Transverse colon (tissue), 4 donors: ENCODE measurements at regions of chr11 and their contacts with region 1.

Region 1: DNA sequence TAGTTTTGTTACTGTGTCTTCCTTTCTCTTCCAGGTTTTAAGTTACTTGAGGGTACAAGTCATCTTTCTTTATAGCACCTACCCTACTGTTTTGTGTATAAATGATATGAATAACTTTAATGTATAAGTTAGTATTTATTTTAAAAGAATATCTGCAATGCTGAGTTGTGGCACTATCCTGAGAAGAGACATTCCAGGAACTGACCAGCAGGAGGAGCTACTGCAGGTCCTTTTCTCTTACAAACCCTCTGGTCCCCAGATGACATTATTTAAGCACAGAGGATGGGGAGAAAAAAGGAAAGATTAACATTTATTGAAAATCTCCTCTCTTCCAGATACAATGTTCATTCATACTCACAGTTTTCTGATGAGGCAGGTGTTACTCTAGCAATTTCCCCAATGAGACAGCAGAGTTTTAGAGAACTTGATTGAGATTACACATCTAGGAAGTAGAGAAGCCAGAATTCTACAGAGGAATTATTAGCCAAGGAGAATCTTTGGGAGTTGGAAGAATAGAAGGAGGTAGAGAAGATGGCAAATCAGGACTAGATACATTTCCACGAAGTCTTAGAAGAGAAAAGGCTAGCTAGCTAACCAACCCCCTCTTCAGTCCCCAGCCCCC is 541.2 kb upstream of the API5 start:
- DNase-seq: peak; percentile 7
- H3K4me3 ChIP-seq: no peak overlapping the region
- H3K27ac ChIP-seq: no peak overlapping the region
- H3K4me1 ChIP-seq: no peaks in the 10 kb centered on the region
- H3K27me3 ChIP-seq: no peaks in the 10 kb centered on the region
- CTCF ChIP-seq: peak; percentile 37 to 61 (median 59)
- EP300 ChIP-seq: no peak
- POLR2A ChIP-seq: no peak

Region 2: GRCh38 chr11:42647993-42648392 is 122.6 kb before region 1 on chr11:
- in situ Hi-C with region 1: no loop called
- intact Hi-C with region 1: no loop called
- DNase-seq: no peak
- H3K4me3 ChIP-seq: no peak overlapping the region
- H3K27ac ChIP-seq: no peak overlapping the region
- H3K4me1 ChIP-seq: no peaks in the 10 kb centered on the region
- H3K27me3 ChIP-seq: no peaks in the 10 kb centered on the region
- CTCF ChIP-seq: no peak
- EP300 ChIP-seq: no peak
- POLR2A ChIP-seq: no peak

Region 3: GRCh38 chr11:43053638-43054412 is 283.3 kb after region 1 on chr11:
- in situ Hi-C with region 1: no loop called
- intact Hi-C with region 1: no loop called
- DNase-seq: no peak
- H3K4me3 ChIP-seq: no peak overlapping the region
- H3K27ac ChIP-seq: no peak overlapping the region
- H3K4me1 ChIP-seq: no peaks in the 10 kb centered on the region
- H3K27me3 ChIP-seq: no peaks in the 10 kb centered on the region
- CTCF ChIP-seq: no peak
- EP300 ChIP-seq: no peak
- POLR2A ChIP-seq: no peak

Region 4: GRCh38 chr11:43282607-43283440 is 512.3 kb after region 1 on chr11:
- in situ Hi-C with region 1: loop called (anchors 10 to 25 kb)
- intact Hi-C with region 1: no loop called
- DNase-seq: peak; percentile 24
- H3K4me3 ChIP-seq: no peak overlapping the region
- H3K27ac ChIP-seq: no peak overlapping the region
- H3K4me1 ChIP-seq: no peaks in the 10 kb centered on the region
- H3K27me3 ChIP-seq: peaks cover 25% of the 10 kb centered on the region
- CTCF ChIP-seq: peak; percentile 49 to 86 (median 81)
- EP300 ChIP-seq: no peak
- POLR2A ChIP-seq: no peak